A549 (cell line): ENCODE measurements at regions of chr6 and their contacts with region 1.

Region 1: GRCh38 chr6:41367700-41368099 is 32.3 kb downstream of the NCR2 start:
- DNase-seq: peak; percentile 56 to 59
- ATAC-seq: peak; percentile 93 to 96
- H3K4me3 ChIP-seq: no peak overlapping the region
- H3K27ac ChIP-seq: no peak overlapping the region
- H3K4me1 ChIP-seq: peaks cover 5% of the 10 kb centered on the region; the same call in 1 of the 3 replicates
- CTCF ChIP-seq: peak; percentile 68
- EP300 ChIP-seq: no peak
- POLR2A ChIP-seq: no peak
- RAD21 ChIP-seq: peak; percentile 85

Region 2: GRCh38 chr6:41306187-41306854 is 61.4 kb before region 1 on chr6:
- CTCF ChIA-PET with region 1: interaction called, 10 read pairs
- POLR2A ChIA-PET with region 1: no interaction called
- DNase-seq: peak; percentile 28 to 52
- ATAC-seq: peak in 1 of 2 experiments; percentile 61; a peak in 1 of 6 replicates
- H3K4me3 ChIP-seq: no peak overlapping the region; the same call in 2 of the 3 replicates
- H3K27ac ChIP-seq: no peak overlapping the region
- H3K4me1 ChIP-seq: peaks cover 3% of the 10 kb centered on the region; the same call in 1 of the 3 replicates
- CTCF ChIP-seq: peak; percentile 54
- EP300 ChIP-seq: no peak
- POLR2A ChIP-seq: no peak
- RAD21 ChIP-seq: peak; percentile 48 to 51

Region 3: DNA sequence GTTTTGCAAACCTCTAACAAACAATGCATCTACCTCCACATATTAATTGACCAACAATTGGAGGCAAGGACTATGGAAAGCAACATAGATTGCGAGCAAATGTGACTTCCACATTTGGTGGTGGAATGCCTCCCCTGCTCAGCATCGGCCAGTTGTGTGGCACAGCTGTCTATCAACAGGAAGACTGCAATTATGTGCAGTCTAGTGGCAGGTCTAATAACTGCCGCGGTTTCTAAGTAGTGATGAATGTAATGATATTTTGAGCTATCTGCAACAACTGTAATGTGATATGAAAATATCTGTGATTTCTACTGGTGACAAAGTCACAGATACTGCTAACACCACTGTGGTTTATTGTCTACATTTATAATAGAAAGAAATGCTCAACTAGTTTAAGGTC is 24.5 kb after region 1 on chr6:
- CTCF ChIA-PET with region 1: interaction called, 35 read pairs
- POLR2A ChIA-PET with region 1: no interaction called
- DNase-seq: no peak
- ATAC-seq: no peak
- H3K4me3 ChIP-seq: no peak overlapping the region
- H3K27ac ChIP-seq: no peak overlapping the region
- H3K4me1 ChIP-seq: no peaks in the 10 kb centered on the region
- CTCF ChIP-seq: no peak
- EP300 ChIP-seq: no peak
- POLR2A ChIP-seq: no peak
- RAD21 ChIP-seq: no peak

Region 4: GRCh38 chr6:41591859-41592502 is 224.3 kb after region 1 on chr6:
- CTCF ChIA-PET with region 1: interaction called, 87 read pairs
- POLR2A ChIA-PET with region 1: no interaction called
- DNase-seq: peak; percentile 43 to 77
- ATAC-seq: peak; percentile 78 to 90
- H3K4me3 ChIP-seq: no peak overlapping the region
- H3K27ac ChIP-seq: no peak overlapping the region
- H3K4me1 ChIP-seq: peaks cover 5% of the 10 kb centered on the region; the same call in 2 of the 3 replicates
- CTCF ChIP-seq: peak; percentile 73
- EP300 ChIP-seq: no peak
- POLR2A ChIP-seq: no peak
- RAD21 ChIP-seq: peak; percentile 90 to 92

Region 5: GRCh38 chr6:41652877-41653644 is 285.4 kb after region 1 on chr6:
- CTCF ChIA-PET with region 1: interaction called, 12 read pairs
- POLR2A ChIA-PET with region 1: no interaction called
- DNase-seq: no peak
- ATAC-seq: no peak
- H3K4me3 ChIP-seq: no peak overlapping the region
- H3K27ac ChIP-seq: no peak overlapping the region
- H3K4me1 ChIP-seq: no peaks in the 10 kb centered on the region
- CTCF ChIP-seq: no peak
- EP300 ChIP-seq: no peak
- POLR2A ChIP-seq: no peak
- RAD21 ChIP-seq: no peak

Region 6: GRCh38 chr6:41775293-41776181 is 407.8 kb after region 1 on chr6:
- CTCF ChIA-PET with region 1: interaction called, 14 read pairs
- POLR2A ChIA-PET with region 1: no interaction called
- DNase-seq: peak; percentile 74 to 82
- ATAC-seq: peak; percentile 52 to 74; a peak in 5 of 6 replicates
- H3K4me3 ChIP-seq: no peak overlapping the region
- H3K27ac ChIP-seq: no peak overlapping the region
- H3K4me1 ChIP-seq: peaks cover 7% of the 10 kb centered on the region; the same call in 2 of the 3 replicates
- CTCF ChIP-seq: peak; percentile 66
- EP300 ChIP-seq: no peak
- POLR2A ChIP-seq: no peak
- RAD21 ChIP-seq: peak; percentile 70 to 84

Region 7: GRCh38 chr6:42938987-42939809 is 1571.5 kb after region 1 on chr6:
- CTCF ChIA-PET with region 1: no interaction called
- POLR2A ChIA-PET with region 1: no interaction called
- DNase-seq: no peak
- ATAC-seq: peak in 1 of 2 experiments; percentile 25; a peak in 1 of 6 replicates
- H3K4me3 ChIP-seq: no peak overlapping the region
- H3K27ac ChIP-seq: no peak overlapping the region
- H3K4me1 ChIP-seq: no peaks in the 10 kb centered on the region
- CTCF ChIP-seq: no peak
- EP300 ChIP-seq: no peak
- POLR2A ChIP-seq: no peak
- RAD21 ChIP-seq: no peak